CD8-positive, alpha-beta T cell (primary cell): ENCODE measurements at regions of chr1 and their contacts with region 1.

Region 1: DNA sequence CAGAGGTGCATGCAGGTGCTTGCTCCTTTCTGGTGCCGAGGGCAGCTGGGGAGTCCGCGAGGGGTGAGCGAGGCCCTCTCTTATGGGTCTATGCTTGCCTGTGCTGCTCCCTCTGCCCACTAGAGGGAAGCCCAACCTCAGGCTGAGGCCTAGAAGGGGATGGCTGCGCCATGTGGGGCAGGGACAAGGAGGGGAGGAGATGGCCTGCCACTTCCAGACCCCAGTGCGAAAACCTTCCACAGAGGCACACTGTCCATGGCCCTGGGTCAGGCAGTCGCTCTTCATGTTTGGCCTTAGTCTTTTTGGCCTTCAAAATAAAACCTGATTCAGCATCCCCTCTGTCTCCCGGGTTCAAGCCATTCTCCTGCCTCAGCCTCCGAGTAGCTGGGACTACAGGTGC is 14.0 kb downstream of the RHBG start:
- DNase-seq: peak; percentile 21 to 73 (median 64)
- ATAC-seq: peak; percentile 82
- H3K4me3 ChIP-seq: no peak overlapping the region
- H3K4me3 Mint-ChIP-seq: no peak overlapping the region
- H3K27ac ChIP-seq: no peak overlapping the region
- H3K27ac Mint-ChIP-seq: no peak overlapping the region
- H3K4me1 ChIP-seq: peaks cover 6% of the 10 kb centered on the region
- H3K4me1 Mint-ChIP-seq: peaks cover 7% of the 10 kb centered on the region
- H3K27me3 ChIP-seq: peaks cover 0 to 3% of the 10 kb centered on the region in 2 experiments
- H3K27me3 Mint-ChIP-seq: peaks cover 9% of the 10 kb centered on the region
- CTCF ChIP-seq: peak; percentile 61

Region 2: DNA sequence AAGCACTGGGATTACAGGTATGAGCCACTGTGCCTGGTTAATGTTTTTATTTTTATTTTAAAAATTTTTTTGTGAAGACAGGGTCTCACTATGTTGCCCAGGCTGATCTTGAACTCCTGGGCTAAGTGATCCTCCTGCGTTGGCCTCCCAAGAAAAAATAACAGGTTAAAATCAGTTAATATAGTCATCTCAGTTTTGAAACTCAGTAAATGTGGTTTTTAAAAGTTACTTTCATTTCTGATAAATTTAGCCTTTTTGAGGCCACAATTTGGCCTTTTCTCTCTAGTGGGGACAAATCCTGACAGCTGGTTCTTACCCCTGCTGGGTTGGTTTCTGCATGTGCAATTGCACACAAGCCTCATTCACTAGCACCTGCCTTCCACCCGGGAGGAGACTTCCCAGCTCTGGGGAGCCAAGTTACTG is 156.9 kb before region 1 on chr1:
- CTCF ChIA-PET with region 1: no interaction called
- POLR2A ChIA-PET with region 1: no interaction called
- intact Hi-C with region 1: no loop called
- DNase-seq: no peak
- ATAC-seq: no peak
- H3K4me3 ChIP-seq: no peak overlapping the region
- H3K4me3 Mint-ChIP-seq: no peak overlapping the region
- H3K27ac ChIP-seq: peak overlapping the region in 1 of 2 experiments; percentile 3
- H3K27ac Mint-ChIP-seq: no peak overlapping the region
- H3K4me1 ChIP-seq: no peaks in the 10 kb centered on the region
- H3K4me1 Mint-ChIP-seq: peaks cover 16% of the 10 kb centered on the region
- H3K27me3 ChIP-seq: no peaks in the 10 kb centered on the region
- H3K27me3 Mint-ChIP-seq: no peaks in the 10 kb centered on the region
- CTCF ChIP-seq: no peak

Region 3: GRCh38 chr1:156356875-156357534 is 26.0 kb before region 1 on chr1:
- CTCF ChIA-PET with region 1: interaction called, 13 read pairs
- POLR2A ChIA-PET with region 1: no interaction called
- intact Hi-C with region 1: no loop called
- DNase-seq: peak; percentile 15 to 73 (median 67)
- ATAC-seq: peak; percentile 99
- H3K4me3 ChIP-seq: no peak overlapping the region
- H3K4me3 Mint-ChIP-seq: no peak overlapping the region
- H3K27ac ChIP-seq: no peak overlapping the region
- H3K27ac Mint-ChIP-seq: no peak overlapping the region
- H3K4me1 ChIP-seq: peaks cover 3% of the 10 kb centered on the region
- H3K4me1 Mint-ChIP-seq: peaks cover 7% of the 10 kb centered on the region
- H3K27me3 ChIP-seq: peaks cover 0 to 6% of the 10 kb centered on the region in 2 experiments
- H3K27me3 Mint-ChIP-seq: peaks cover 16% of the 10 kb centered on the region
- CTCF ChIP-seq: peak; percentile 78

Region 4: DNA sequence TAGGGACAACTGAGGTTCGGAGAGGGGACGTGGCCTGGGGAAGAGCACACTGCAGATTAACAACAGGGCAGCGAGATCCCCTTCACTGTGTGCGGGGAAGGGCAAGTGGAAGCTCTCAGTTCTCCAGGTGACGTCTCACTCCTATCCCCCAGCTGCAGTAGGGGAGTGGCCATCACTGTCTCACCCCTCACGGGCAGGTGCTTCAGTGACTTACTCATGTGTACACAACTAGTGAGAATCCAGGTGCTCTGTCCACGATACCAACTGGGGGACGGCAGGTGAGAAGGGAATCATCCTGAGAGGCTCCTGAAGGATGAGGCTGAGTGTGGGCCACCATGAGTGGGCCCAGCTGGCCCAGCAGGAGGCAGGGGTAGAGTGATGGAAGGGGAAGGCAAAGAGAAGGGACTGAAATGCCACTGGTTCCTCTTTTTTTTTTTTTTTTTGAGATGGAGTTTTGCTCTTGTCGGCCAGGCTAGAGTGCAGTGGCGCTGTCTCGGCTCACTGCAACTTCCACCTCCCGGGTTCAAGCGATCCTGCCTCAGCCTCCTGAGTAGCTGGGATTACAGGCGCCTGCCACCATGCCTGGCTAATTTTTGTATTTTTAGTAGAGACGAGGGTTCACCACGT is 11.9 kb after region 1 on chr1:
- CTCF ChIA-PET with region 1: interaction called, 11 read pairs
- POLR2A ChIA-PET with region 1: interaction called, 3 read pairs
- intact Hi-C with region 1: no loop called
- DNase-seq: no peak
- ATAC-seq: no peak
- H3K4me3 ChIP-seq: no peak overlapping the region
- H3K4me3 Mint-ChIP-seq: no peak overlapping the region
- H3K27ac ChIP-seq: no peak overlapping the region
- H3K27ac Mint-ChIP-seq: no peak overlapping the region
- H3K4me1 ChIP-seq: no peaks in the 10 kb centered on the region
- H3K4me1 Mint-ChIP-seq: no peaks in the 10 kb centered on the region
- H3K27me3 ChIP-seq: no peaks in the 10 kb centered on the region
- H3K27me3 Mint-ChIP-seq: peaks cover 10% of the 10 kb centered on the region
- CTCF ChIP-seq: no peak

Region 5: GRCh38 chr1:156421062-156421938 is 38.3 kb after region 1 on chr1:
- CTCF ChIA-PET with region 1: interaction called, 62 read pairs
- POLR2A ChIA-PET with region 1: interaction called, 3 read pairs
- intact Hi-C with region 1: loop called (anchors 2 kb)
- DNase-seq: peak; percentile 31 to 87 (median 68)
- ATAC-seq: peak; percentile 64
- H3K4me3 ChIP-seq: peak overlapping the region; percentile 66 to 71
- H3K4me3 Mint-ChIP-seq: peak overlapping the region; percentile 93
- H3K27ac ChIP-seq: no peak overlapping the region
- H3K27ac Mint-ChIP-seq: no peak overlapping the region
- H3K4me1 ChIP-seq: peaks cover 27% of the 10 kb centered on the region
- H3K4me1 Mint-ChIP-seq: peaks cover 24% of the 10 kb centered on the region
- H3K27me3 ChIP-seq: peaks cover 28 to 29% of the 10 kb centered on the region in 2 experiments
- H3K27me3 Mint-ChIP-seq: peaks cover 68% of the 10 kb centered on the region
- CTCF ChIP-seq: no peak

Region 6: DNA sequence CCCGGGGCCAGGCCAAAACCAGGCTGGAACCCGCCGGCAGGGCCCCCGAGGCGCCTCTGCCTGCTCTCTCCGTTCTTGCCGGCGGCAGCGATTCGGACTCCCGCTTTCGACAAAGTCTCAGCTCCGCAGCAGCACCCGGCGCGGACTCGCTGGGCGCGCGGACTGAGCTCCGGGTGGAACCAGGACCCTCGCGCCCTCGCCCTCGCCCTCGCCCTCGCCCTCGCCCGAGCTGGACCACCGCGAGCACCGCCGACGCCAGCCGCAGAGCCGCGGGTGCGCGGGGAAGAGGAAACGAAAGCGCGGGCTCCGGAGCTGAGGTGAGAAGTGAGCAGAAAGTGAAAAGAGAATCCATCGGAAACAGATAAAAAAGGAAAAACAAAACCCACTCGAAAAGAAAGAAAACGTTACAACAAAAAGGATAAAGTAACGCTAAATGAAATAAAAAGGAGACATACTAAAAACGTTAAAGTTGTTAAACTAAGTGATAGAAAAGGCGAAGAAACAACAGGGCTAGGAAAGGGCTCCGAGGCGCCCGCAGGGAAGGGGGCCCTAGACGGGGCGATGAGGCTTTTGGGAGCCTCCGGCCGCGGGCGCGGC is 52.6 kb after region 1 on chr1:
- CTCF ChIA-PET with region 1: interaction called, 72 read pairs
- POLR2A ChIA-PET with region 1: no interaction called
- intact Hi-C with region 1: no loop called
- DNase-seq: peak in 3 of 9 experiments; percentile 24 to 51 (median 33)
- ATAC-seq: peak; percentile 27
- H3K4me3 ChIP-seq: peak overlapping the region; percentile 31 to 34
- H3K4me3 Mint-ChIP-seq: peak overlapping the region; percentile 82
- H3K27ac ChIP-seq: no peak overlapping the region
- H3K27ac Mint-ChIP-seq: no peak overlapping the region
- H3K4me1 ChIP-seq: peaks cover 33% of the 10 kb centered on the region
- H3K4me1 Mint-ChIP-seq: peaks cover 29% of the 10 kb centered on the region
- H3K27me3 ChIP-seq: peaks cover 62 to 75% of the 10 kb centered on the region in 2 experiments
- H3K27me3 Mint-ChIP-seq: peaks cover 79% of the 10 kb centered on the region
- CTCF ChIP-seq: no peak

Region 7: GRCh38 chr1:156489166-156489934 is 106.3 kb after region 1 on chr1:
- CTCF ChIA-PET with region 1: interaction called, 13 read pairs
- POLR2A ChIA-PET with region 1: no interaction called
- intact Hi-C with region 1: no loop called
- DNase-seq: peak in 7 of 9 experiments; percentile 34 to 79 (median 64)
- ATAC-seq: peak; percentile 73
- H3K4me3 ChIP-seq: peak overlapping the region; percentile 24 to 29
- H3K4me3 Mint-ChIP-seq: peak overlapping the region; percentile 73
- H3K27ac ChIP-seq: peak overlapping the region; percentile 44 to 88
- H3K27ac Mint-ChIP-seq: peak overlapping the region; percentile 93
- H3K4me1 ChIP-seq: peaks cover 85% of the 10 kb centered on the region
- H3K4me1 Mint-ChIP-seq: peaks cover 94% of the 10 kb centered on the region
- H3K27me3 ChIP-seq: no peaks in the 10 kb centered on the region
- H3K27me3 Mint-ChIP-seq: no peaks in the 10 kb centered on the region
- CTCF ChIP-seq: no peak

Region 8: GRCh38 chr1:156608036-156608674 is 225.1 kb after region 1 on chr1:
- CTCF ChIA-PET with region 1: interaction called, 43 read pairs
- POLR2A ChIA-PET with region 1: no interaction called
- intact Hi-C with region 1: loop called in 1 of 2 experiments (anchors 1 kb)
- DNase-seq: peak; percentile 37 to 89 (median 65)
- ATAC-seq: peak; percentile 95
- H3K4me3 ChIP-seq: no peak overlapping the region
- H3K4me3 Mint-ChIP-seq: no peak overlapping the region
- H3K27ac ChIP-seq: no peak overlapping the region
- H3K27ac Mint-ChIP-seq: no peak overlapping the region
- H3K4me1 ChIP-seq: peaks cover 8% of the 10 kb centered on the region
- H3K4me1 Mint-ChIP-seq: peaks cover 11% of the 10 kb centered on the region
- H3K27me3 ChIP-seq: peaks cover 0 to 2% of the 10 kb centered on the region in 2 experiments
- H3K27me3 Mint-ChIP-seq: peaks cover 9% of the 10 kb centered on the region
- CTCF ChIP-seq: peak; percentile 88

Region 9: DNA sequence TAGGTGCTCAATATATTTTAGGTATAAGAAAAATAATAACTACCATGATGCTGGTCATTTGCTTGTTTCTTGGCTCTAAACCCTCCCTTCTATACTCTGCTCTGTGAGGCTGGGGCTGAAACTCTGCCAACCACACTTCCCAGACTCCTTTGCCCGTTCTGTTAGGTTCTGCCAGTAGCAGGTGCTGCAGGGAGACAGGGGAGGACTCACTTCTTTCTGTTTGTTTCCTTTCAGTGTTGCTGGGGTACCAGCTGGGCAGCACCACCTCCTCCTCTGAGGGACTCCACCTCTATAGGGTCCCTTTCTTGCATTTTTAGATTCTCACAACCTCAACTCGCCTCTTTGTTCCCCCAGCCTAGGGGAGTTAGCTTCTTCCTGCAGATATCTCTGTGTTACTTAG is 450.6 kb after region 1 on chr1:
- CTCF ChIA-PET with region 1: no interaction called
- POLR2A ChIA-PET with region 1: no interaction called
- intact Hi-C with region 1: no loop called
- DNase-seq: peak in 3 of 9 experiments; percentile 40 to 70 (median 40)
- ATAC-seq: peak; percentile 83
- H3K4me3 ChIP-seq: no peak overlapping the region
- H3K4me3 Mint-ChIP-seq: no peak overlapping the region
- H3K27ac ChIP-seq: no peak overlapping the region
- H3K27ac Mint-ChIP-seq: no peak overlapping the region
- H3K4me1 ChIP-seq: no peaks in the 10 kb centered on the region
- H3K4me1 Mint-ChIP-seq: peaks cover 4% of the 10 kb centered on the region
- H3K27me3 ChIP-seq: no peaks in the 10 kb centered on the region
- H3K27me3 Mint-ChIP-seq: peaks cover 7% of the 10 kb centered on the region
- CTCF ChIP-seq: no peak